ENCODE measurements at regions of chr3 and their contacts with region 1.

Region 1: DNA sequence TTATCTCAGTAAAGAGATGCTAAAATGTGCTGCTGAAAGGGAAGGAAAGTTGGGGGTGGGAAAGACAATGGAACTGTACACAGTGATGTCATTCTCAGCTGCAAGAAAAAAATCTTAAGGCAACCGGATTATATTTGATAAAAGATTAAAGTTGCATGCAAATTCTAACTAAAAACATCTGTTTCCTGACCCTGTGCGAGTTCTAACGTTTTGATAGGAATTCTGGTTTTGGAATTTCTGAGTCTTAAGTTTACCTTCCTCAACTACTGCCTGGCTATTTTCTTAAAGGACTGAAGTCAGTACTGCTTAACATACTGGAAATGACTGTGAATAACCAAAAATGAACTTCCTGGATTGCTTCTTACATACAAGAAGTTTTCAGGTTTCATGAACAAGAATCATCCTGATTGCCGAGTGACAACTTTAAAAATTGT is 115.5 kb downstream of the SLC25A26 start:
- DNase-seq: no peak

Region 2: DNA sequence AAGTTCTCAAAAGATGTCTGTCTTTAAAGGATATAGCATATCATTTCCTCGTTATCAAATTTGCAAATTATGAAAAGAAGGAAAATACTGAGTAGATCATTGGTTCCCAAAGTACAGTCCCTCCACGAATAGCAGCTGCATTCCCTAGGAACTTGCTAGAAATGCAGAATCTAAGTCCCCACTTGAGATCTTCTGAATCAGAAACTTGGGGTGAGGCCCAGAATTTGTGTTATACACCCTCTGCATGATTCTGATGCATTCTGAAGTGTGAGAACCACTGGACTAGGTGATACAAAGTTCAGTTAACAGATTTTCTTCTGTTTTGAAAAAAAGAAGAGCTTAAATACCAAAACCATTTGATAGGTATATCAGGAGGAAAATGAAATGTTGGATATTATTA is 38.5 kb before region 1 on chr3:
- intact Hi-C with region 1: loop called (anchors 5 kb)
- DNase-seq: no peak